ENCODE measurements at regions of chr6 and their contacts with region 1.

Region 1: DNA sequence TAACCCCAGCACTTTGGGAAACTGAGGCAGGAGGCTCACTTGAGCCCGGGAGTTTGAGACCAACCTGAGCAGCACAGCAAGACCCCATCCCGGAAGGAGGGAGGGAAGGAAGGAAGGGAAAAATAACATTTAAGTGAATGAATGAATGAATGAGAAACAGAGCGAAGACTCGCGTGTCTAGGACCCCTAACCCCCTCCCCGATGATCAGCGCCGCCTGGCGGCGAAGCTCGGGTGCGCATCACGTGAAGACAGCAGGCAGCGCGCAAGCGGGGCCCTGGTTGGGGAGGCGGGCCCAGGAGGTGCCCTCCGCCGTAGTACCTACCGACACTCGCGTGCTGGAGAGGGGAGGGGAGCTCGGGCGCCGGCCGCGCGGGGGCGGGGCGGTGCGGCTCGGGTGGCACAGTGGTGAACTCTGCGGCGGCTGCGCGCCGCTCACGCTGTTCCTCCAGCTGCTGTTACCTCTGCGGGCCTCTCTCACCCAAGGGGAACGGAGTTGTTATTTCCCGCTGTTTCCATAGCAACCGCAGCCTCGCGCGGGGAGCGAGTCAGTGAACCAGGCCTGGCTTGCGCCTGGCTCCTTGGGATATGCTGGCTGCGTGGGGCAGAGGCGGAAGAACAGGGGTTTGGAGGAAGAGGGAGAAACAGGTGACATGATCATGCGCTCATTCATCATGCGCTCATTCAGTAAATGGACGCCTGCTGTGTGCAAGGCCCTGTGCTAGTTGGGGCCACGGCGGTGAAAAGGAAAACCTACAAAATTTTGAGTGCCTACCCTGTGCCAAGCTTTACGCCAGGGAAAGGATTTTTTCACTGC is 2.0 kb upstream of the DCDC2 start:
- DNase-seq: peak; percentile 96
- ATAC-seq: peak; percentile 87
- H3K4me3 Mint-ChIP-seq: peak overlapping the region; percentile 75
- H3K27ac Mint-ChIP-seq: no peak overlapping the region
- H3K4me1 Mint-ChIP-seq: peaks cover 19% of the 10 kb centered on the region
- H3K27me3 Mint-ChIP-seq: peaks cover 42% of the 10 kb centered on the region
- CTCF ChIP-seq: peak; percentile 93

Region 2: DNA sequence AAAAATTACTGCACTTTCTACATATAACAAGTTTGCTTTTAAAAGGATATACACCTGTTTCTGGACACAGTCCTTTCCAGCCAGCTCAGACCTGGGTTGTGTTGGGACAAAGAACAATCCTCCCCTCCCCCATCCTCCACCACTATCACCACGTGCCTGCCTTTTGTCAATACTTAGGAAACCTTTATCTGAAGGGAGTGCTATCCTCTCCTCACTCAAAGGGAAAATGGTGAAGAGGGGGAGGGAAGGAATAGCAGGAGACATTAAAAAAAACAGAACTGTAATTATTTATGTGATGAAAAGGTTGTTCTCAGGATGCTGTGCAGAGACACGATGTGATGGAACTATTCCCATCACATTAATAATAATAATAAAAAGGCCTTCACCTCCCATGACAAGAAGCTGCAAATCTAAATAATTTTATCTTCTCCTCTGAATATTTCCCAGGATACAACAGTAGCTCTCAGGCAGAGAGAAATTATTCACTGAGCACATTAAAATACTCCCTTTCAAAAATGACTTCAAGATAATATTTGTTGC is 128.3 kb before region 1 on chr6:
- CTCF ChIA-PET with region 1: no interaction called
- POLR2A ChIA-PET with region 1: no interaction called
- DNase-seq: no peak
- ATAC-seq: no peak
- H3K4me3 Mint-ChIP-seq: no peak overlapping the region
- H3K27ac Mint-ChIP-seq: no peak overlapping the region
- H3K4me1 Mint-ChIP-seq: peaks cover 27% of the 10 kb centered on the region
- H3K27me3 Mint-ChIP-seq: no peaks in the 10 kb centered on the region
- CTCF ChIP-seq: no peak

Region 3: GRCh38 chr6:24283043-24283985 is 76.5 kb before region 1 on chr6:
- CTCF ChIA-PET with region 1: interaction called, 32 read pairs
- POLR2A ChIA-PET with region 1: interaction called, 4 read pairs
- DNase-seq: peak; percentile 74
- ATAC-seq: peak; percentile 95
- H3K4me3 Mint-ChIP-seq: peak overlapping the region; percentile 48
- H3K27ac Mint-ChIP-seq: no peak overlapping the region
- H3K4me1 Mint-ChIP-seq: no peaks in the 10 kb centered on the region
- H3K27me3 Mint-ChIP-seq: no peaks in the 10 kb centered on the region
- CTCF ChIP-seq: no peak; the same call in 1 of the 2 replicates

Region 4: GRCh38 chr6:24307881-24308280 is 52.0 kb before region 1 on chr6:
- CTCF ChIA-PET with region 1: interaction called, 15 read pairs
- POLR2A ChIA-PET with region 1: no interaction called
- DNase-seq: no peak
- ATAC-seq: 0 out of 2 replicates have a peak, but pooled peaks have one; percentile 34
- H3K4me3 Mint-ChIP-seq: no peak overlapping the region
- H3K27ac Mint-ChIP-seq: no peak overlapping the region
- H3K4me1 Mint-ChIP-seq: peaks cover 14% of the 10 kb centered on the region
- H3K27me3 Mint-ChIP-seq: no peaks in the 10 kb centered on the region; the same call in 1 of the 2 replicates
- CTCF ChIP-seq: no peak

Region 5: GRCh38 chr6:24313251-24314141 is 46.4 kb before region 1 on chr6:
- CTCF ChIA-PET with region 1: interaction called, 14 read pairs
- POLR2A ChIA-PET with region 1: no interaction called
- DNase-seq: peak; percentile 50
- ATAC-seq: peak; percentile 91
- H3K4me3 Mint-ChIP-seq: peak overlapping the region; percentile 29; the same call in 1 of the 2 replicates
- H3K27ac Mint-ChIP-seq: peak overlapping the region; percentile 92
- H3K4me1 Mint-ChIP-seq: peaks cover 17% of the 10 kb centered on the region
- H3K27me3 Mint-ChIP-seq: peaks cover 36% of the 10 kb centered on the region
- CTCF ChIP-seq: no peak

Region 6: DNA sequence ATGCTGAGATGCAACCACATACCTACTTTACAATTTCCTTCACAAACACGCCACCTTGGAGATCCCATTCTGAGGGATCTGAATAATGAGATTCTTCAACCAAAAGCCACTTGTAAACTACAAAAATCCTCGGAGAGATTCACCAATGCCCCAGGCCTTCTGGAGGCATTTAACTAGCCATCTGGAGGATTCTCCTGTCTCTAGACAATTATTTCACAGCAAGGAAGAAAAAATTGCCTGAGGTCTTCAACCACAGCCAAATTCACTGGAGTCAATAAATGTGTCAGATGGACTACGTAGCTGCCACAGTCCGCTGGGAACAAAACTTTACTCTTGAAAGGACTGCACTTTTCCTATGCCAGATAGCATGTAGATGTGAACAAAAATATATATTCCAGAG is 17.0 kb after region 1 on chr6:
- CTCF ChIA-PET with region 1: interaction called, 10 read pairs
- POLR2A ChIA-PET with region 1: no interaction called
- DNase-seq: no peak
- ATAC-seq: no peak
- H3K4me3 Mint-ChIP-seq: no peak overlapping the region
- H3K27ac Mint-ChIP-seq: no peak overlapping the region
- H3K4me1 Mint-ChIP-seq: peaks cover 14% of the 10 kb centered on the region
- H3K27me3 Mint-ChIP-seq: no peaks in the 10 kb centered on the region
- CTCF ChIP-seq: no peak

Region 7: DNA sequence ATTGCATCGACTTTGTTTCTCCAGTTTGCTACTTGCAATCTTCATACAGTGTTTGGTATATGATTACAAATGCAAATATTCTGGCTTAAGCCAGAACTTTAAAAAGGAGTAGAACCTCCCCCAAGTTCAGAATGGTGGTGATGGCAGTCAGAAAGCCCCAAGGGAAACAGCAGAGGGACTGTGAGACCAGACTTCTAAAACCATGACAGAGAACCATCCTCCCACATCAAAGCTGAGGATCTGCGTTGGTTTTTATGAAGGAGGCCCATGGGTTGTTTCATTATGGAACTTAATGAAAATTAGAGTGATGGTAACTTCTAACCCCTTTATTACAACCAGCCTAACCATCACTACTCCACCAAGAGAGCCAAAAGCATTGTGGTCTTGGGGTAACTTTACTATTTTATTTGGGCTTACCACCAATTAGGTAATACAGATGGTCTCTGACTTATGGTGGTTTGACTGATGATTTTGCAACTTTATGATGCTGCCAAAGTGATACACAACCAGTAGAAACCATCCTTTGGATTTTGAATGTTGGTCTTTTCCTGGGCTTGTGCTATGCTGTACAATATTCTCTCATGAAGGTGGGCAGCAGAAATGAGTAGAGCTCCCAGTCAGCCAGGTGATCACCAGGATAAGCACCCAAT is 32.0 kb after region 1 on chr6:
- CTCF ChIA-PET with region 1: interaction called, 14 read pairs
- POLR2A ChIA-PET with region 1: interaction called, 3 read pairs
- DNase-seq: no peak
- ATAC-seq: no peak
- H3K4me3 Mint-ChIP-seq: no peak overlapping the region
- H3K27ac Mint-ChIP-seq: no peak overlapping the region
- H3K4me1 Mint-ChIP-seq: no peaks in the 10 kb centered on the region
- H3K27me3 Mint-ChIP-seq: no peaks in the 10 kb centered on the region; the same call in 1 of the 2 replicates
- CTCF ChIP-seq: no peak

Region 8: DNA sequence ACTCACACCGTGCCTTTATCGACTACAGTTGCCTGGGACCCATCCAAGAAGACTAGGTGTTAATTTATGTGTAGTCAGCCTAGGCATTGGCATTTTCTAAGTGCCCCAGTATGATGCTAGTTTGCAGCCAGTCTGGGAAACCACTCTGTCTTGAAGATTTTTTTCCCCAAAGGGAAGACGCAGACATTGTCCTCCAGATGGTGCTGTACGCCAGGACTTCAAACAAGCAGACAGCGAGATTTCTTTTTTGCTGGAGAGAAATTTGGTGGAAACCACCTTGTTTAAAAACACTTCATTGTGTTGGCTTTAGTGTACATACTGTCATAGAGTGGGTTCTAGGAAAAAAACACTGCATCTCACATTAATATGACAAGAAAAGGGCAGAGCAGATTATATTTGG is 165.0 kb after region 1 on chr6:
- CTCF ChIA-PET with region 1: no interaction called
- POLR2A ChIA-PET with region 1: no interaction called
- DNase-seq: peak; percentile 19
- ATAC-seq: peak; percentile 38
- H3K4me3 Mint-ChIP-seq: no peak overlapping the region
- H3K27ac Mint-ChIP-seq: no peak overlapping the region
- H3K4me1 Mint-ChIP-seq: no peaks in the 10 kb centered on the region
- H3K27me3 Mint-ChIP-seq: no peaks in the 10 kb centered on the region
- CTCF ChIP-seq: no peak; the same call in 1 of the 2 replicates